Mammary epithelial cell (primary cell): ENCODE measurements at regions of chr1 and their contacts with region 1.

Region 1: DNA sequence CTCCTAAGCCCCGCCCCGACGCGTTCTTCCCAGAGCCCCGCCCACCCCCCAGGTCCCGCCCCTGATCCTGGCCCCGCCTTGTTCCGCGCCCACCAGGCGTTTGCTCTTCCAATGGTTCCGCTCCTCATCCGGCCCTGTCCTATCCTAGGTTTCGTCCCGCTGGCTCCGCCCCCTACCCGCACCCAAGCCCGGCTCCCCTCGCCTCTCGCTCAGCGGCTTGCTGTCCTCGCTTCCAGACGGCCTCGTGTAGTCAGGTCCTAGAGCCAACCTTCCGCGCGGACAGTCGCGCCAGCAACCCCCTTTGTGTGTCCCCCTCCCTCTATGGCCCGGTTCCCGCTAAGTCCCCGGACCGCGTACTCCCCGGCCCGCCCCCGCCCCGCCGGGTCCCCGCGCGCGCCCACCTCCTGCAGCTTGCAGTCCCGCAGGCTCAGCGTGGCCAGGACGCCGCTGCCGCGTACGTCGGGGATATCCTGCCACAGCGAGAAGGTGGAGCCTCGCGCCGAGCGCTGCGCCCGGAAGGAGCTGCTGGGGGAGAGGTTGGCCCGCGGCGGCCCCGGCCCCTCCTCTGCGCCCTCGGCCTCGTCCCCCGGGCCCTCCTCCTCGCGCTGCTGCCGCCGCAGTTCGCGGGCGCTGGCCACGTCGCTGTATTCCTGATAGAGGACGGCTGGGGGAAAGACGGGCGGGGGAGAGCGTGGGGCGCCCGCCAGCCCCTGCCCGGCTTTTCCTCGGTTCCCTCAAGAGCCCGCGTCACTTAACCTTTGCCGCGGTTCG is 5.7 kb downstream of the ARHGEF19 start:
- DNase-seq: peak; percentile 91
- H3K4me3 ChIP-seq: peak overlapping the region; percentile 40 to 45 (median 43)
- H3K27ac ChIP-seq: no peak overlapping the region
- H3K4me1 ChIP-seq: peaks cover 8% of the 10 kb centered on the region
- H3K27me3 ChIP-seq: no peaks in the 10 kb centered on the region
- CTCF ChIP-seq: no peak

Region 2: DNA sequence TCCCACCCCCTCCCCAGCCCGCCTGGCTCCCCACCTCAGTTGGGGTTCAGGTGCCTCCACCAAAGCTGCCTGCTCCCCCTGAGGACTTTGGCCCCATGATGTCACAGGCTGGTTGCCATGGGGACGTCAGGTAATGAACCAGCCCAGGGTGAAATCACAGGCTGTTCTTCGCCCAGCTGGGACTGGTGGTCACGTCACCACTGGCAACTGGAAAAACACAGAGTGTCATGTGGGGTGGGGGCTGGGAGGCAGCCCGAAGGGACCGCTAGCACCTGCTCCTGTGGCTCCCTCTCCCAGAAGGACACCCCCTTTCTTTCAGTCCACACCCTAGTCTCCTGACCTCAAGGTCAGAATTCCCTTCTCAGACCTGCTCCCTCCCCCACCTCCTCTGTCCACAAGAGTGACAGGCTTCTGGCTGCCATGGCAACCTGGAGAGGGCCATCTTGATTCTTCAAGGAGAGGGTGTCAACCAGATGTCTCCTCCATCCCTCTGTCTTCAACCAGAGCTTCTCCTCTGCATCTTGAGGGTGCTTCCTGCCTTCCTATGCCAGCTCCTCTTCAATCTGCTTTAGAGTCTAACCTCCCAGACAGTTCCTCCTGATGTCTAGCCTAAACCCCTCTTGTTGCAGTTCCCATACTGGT is 139.5 kb before region 1 on chr1:
- CTCF ChIA-PET with region 1: no interaction called
- dilution Hi-C with region 1: loop called (anchors 5 kb)
- in situ Hi-C with region 1: no loop called
- intact Hi-C with region 1: no loop called
- DNase-seq: peak; percentile 46
- H3K4me3 ChIP-seq: no peak overlapping the region
- H3K27ac ChIP-seq: no peak overlapping the region
- H3K4me1 ChIP-seq: no peaks in the 10 kb centered on the region
- H3K27me3 ChIP-seq: no peaks in the 10 kb centered on the region
- CTCF ChIP-seq: no peak

Region 3: GRCh38 chr1:16217061-16217785 is 10.5 kb after region 1 on chr1:
- CTCF ChIA-PET with region 1: interaction called, 5 read pairs
- dilution Hi-C with region 1: no loop called
- in situ Hi-C with region 1: no loop called
- intact Hi-C with region 1: loop called (anchors 1 kb)
- DNase-seq: peak; percentile 95
- H3K4me3 ChIP-seq: peak overlapping the region; percentile 32 to 51 (median 42)
- H3K27ac ChIP-seq: peak overlapping the region; percentile 50
- H3K4me1 ChIP-seq: peaks cover 15% of the 10 kb centered on the region
- H3K27me3 ChIP-seq: no peaks in the 10 kb centered on the region
- CTCF ChIP-seq: no peak

Region 4: GRCh38 chr1:16236511-16237342 is 30.0 kb after region 1 on chr1 and contains the start of gene CPLANE2:
- CTCF ChIA-PET with region 1: no interaction called
- dilution Hi-C with region 1: no loop called
- in situ Hi-C with region 1: no loop called
- intact Hi-C with region 1: loop called (anchors 2 kb)
- DNase-seq: peak; percentile 87
- H3K4me3 ChIP-seq: peak within 1 kb of the TSS; percentile 57 to 71 (median 62)
- H3K27ac ChIP-seq: peak within 1 kb of the TSS; percentile 64
- H3K4me1 ChIP-seq: peaks cover 23% of the 10 kb centered on the region
- H3K27me3 ChIP-seq: no peaks in the 10 kb centered on the region
- CTCF ChIP-seq: no peak
- total RNA-seq, gene CPLANE2: 13.3 to 14.8 TPM